Left lung (tissue), 14 donors: ENCODE measurements at regions of chr10 and their contacts with region 1.

Region 1: DNA sequence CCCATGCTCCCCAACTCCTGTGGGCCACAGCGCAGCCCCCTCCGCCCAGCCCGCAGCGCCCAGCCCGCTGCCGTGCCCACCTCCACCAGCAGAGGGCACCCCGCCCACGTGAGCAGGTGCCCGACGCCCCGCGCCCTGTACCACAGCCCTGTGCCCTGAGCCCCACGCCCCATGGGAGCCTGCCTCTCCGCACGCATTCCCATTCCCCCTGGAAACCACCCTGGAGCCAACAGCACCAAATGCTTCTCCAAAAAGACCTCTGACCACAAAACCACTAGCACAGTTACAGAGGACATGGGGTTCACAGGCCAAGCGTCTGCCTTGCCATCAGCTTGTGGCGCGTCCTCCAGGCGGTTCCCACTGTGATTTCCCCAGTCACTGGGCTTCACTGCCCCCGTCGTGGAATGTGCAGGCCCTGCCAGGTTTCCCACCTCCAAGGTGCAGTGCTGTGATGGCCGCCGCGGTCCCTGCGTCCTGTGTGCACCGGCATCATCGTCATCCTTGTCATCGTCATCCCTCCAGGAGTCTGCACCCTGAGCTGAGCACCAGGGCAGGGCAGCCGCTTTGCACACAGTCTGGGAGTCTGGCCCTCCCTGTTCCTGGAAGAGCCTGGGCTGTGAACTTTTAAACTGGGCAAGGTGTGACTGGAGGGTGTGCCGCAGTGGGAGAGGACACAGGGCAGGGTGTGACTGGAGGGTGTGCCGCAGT is 61.7 kb downstream of the PWWP2B start:
- DNase-seq: peak in 2 of 4 donors; percentile 57 to 94
- ATAC-seq: peak; percentile 89
- H3K4me3 ChIP-seq: no peak overlapping the region
- H3K27ac ChIP-seq: no peak overlapping the region
- H3K4me1 ChIP-seq: peaks cover 0 to 6% of the 10 kb centered on the region in 2 donors
- H3K27me3 ChIP-seq: peaks cover 0 to 11% of the 10 kb centered on the region in 2 donors
- CTCF ChIP-seq: peak; percentile 96 to 97

Region 2: DNA sequence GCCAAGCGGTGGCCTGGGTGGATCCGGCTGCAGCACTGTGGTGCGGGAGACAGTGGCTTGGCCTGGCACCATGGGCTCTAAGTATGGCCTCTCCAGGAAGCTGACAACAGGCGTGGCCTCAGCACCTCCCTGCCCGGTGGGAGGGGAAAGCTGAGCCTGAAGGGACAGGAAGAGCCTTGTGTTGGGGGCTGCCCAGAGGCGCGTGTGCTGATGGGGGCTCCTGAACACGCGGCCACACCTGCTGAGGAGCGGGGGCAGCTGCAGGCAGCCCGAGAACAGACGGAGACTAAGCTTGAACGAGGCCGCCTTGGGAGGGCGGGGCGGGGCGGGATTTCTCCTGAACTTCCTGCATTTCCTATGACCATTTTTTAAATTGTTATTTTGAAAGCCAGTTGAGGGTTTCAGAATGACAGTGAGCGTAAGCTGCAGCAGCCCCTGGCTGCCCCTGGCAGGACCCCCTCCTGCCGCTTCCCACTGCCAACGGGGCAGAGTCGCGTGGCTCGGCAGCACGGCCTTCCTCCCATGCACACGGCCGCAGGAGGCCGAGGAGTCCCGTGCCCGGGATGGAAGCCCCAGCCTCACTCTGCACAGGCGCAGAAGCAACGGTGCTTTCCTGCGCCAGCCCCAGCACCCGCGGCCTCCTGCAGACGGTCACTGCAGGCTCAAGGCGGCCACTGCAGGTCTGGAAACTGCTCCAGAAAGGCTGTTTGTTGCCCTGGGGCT is 228.8 kb before region 1 on chr10:
- intact Hi-C with region 1: loop called in 1 of 2 experiments (anchors 5 kb)
- DNase-seq: peak in 2 of 4 donors; percentile 58 to 90
- ATAC-seq: peak; percentile 73
- H3K4me3 ChIP-seq: peak overlapping the region; percentile 22 to 35
- H3K27ac ChIP-seq: peak overlapping the region; percentile 47 to 70
- H3K4me1 ChIP-seq: peaks cover 3 to 55% of the 10 kb centered on the region in 2 donors
- H3K27me3 ChIP-seq: no peaks in the 10 kb centered on the region
- CTCF ChIP-seq: no peak

Region 3: GRCh38 chr10:132585732-132586722 is 127.3 kb after region 1 on chr10:
- intact Hi-C with region 1: no loop called
- DNase-seq: peak; percentile 60 to 85 (median 78)
- ATAC-seq: peak; percentile 29
- H3K4me3 ChIP-seq: no peak overlapping the region
- H3K27ac ChIP-seq: peak overlapping the region in 1 of 2 donors; percentile 86
- H3K4me1 ChIP-seq: peaks cover 34 to 59% of the 10 kb centered on the region in 2 donors
- H3K27me3 ChIP-seq: no peaks in the 10 kb centered on the region
- CTCF ChIP-seq: no peak

Region 4: DNA sequence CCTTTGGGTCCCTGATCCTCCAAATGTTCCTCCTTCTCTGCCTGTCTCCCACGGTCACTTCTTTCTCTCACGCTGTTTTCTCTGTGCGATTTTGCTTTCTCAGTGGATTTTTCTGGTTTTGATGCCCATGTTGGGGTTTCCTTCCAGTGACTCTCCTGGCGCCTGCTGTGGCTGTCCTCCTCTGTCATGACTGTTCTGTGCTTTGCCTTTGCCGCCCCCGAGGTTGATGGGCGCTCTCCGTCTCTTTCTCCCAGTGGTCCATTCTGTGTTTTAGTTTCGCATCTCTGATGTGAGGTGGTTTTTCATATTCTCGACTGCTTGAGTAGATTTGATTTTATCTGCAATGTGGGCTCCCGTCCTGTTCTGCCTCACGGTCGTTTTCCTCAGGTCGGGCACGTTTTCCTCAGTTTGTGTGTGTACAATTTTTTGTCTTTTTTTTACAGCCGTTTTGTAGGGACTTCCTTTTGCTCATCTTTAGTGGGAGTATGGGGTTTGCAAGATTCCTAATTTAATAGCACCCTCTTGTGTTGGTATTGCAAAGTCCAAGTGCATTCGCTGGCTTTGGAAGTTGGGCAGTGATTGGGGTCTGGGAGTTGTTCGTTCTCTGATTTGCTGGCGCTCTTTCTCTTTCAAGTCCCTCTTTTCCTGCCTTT is 178.9 kb after region 1 on chr10:
- intact Hi-C with region 1: loop called in 1 of 2 experiments (anchors 2 kb)
- DNase-seq: peak in 2 of 4 donors; percentile 60 to 78
- ATAC-seq: peak; percentile 86
- H3K4me3 ChIP-seq: no peak overlapping the region
- H3K27ac ChIP-seq: no peak overlapping the region
- H3K4me1 ChIP-seq: peaks cover 0 to 21% of the 10 kb centered on the region in 2 donors
- H3K27me3 ChIP-seq: no peaks in the 10 kb centered on the region
- CTCF ChIP-seq: peak; percentile 52 to 79